H1 (cell line): ENCODE measurements at regions of chr4 and their contacts with region 1.

Region 1: GRCh38 chr4:117783716-117784115 is 250.6 kb upstream of the NDST3 start:
- DNase-seq: no peak
- H3K4me3 ChIP-seq: no peak overlapping the region
- H3K27ac ChIP-seq: no peak overlapping the region
- H3K4me1 ChIP-seq: no peaks in the 10 kb centered on the region
- H3K27me3 ChIP-seq: no peaks in the 10 kb centered on the region
- CTCF ChIP-seq: no peak
- EP300 ChIP-seq: no peak
- POLR2A ChIP-seq: no peak
- RAD21 ChIP-seq: no peak

Region 2: GRCh38 chr4:117771647-117772337 is 11.9 kb before region 1 on chr4:
- CTCF ChIA-PET with region 1: interaction called, 11 read pairs
- POLR2A ChIA-PET with region 1: no interaction called
- DNase-seq: peak in 1 of 2 experiments; percentile 25
- H3K4me3 ChIP-seq: no peak overlapping the region
- H3K27ac ChIP-seq: no peak overlapping the region
- H3K4me1 ChIP-seq: no peaks in the 10 kb centered on the region; a peak in 1 of 7 replicates
- H3K27me3 ChIP-seq: no peaks in the 10 kb centered on the region
- CTCF ChIP-seq: peak in 2 of 3 experiments; percentile 18 to 51; a peak in 3 of 4 replicates
- EP300 ChIP-seq: no peak
- POLR2A ChIP-seq: no peak
- RAD21 ChIP-seq: peak; percentile 52 to 54